ENCODE measurements at regions of chr10 and their contacts with region 1.

Region 1: DNA sequence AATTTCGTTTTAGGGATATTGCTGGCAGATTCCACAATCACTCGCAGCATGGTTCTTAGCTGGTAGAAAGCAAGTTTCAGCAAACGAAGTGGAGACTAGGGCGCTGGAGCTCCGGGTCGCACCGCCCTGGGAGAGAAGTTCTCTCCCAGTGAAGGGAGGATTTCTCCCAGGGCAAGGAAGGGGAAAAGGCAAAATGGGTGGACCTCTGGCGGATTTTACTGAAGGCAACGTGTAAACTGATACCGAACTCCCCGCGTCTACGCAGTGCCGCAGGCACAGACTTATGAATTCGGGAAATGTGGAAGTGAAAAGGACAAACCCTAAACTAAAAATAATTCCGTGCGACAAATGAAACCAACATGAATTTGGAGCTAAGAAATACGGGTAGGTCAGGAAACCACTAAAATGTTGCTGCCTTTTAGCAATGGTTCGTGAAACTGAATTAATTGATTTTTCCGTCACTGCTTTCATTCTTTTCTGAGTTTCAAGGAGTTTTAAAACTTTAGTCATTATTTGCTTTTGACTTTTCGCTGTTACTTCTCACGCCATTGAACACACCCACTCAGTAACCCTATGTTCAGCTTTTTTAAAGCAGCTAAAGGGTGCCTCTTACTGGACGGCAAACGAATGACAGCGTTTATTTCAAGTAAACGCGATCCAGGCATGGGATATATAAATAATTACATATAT is at the start of gene MYOF:
- DNase-seq: peak; percentile 74

Region 2: GRCh38 chr10:93357680-93358079 is 124.6 kb before region 1 on chr10:
- CTCF ChIA-PET with region 1: interaction called, 13 read pairs
- POLR2A ChIA-PET with region 1: interaction called, 3 read pairs
- DNase-seq: peak; percentile 71

Region 3: GRCh38 chr10:93437088-93437945 is 45.0 kb before region 1 on chr10:
- CTCF ChIA-PET with region 1: interaction called, 11 read pairs
- POLR2A ChIA-PET with region 1: interaction called, 15 read pairs
- DNase-seq: peak; percentile 68

Region 4: DNA sequence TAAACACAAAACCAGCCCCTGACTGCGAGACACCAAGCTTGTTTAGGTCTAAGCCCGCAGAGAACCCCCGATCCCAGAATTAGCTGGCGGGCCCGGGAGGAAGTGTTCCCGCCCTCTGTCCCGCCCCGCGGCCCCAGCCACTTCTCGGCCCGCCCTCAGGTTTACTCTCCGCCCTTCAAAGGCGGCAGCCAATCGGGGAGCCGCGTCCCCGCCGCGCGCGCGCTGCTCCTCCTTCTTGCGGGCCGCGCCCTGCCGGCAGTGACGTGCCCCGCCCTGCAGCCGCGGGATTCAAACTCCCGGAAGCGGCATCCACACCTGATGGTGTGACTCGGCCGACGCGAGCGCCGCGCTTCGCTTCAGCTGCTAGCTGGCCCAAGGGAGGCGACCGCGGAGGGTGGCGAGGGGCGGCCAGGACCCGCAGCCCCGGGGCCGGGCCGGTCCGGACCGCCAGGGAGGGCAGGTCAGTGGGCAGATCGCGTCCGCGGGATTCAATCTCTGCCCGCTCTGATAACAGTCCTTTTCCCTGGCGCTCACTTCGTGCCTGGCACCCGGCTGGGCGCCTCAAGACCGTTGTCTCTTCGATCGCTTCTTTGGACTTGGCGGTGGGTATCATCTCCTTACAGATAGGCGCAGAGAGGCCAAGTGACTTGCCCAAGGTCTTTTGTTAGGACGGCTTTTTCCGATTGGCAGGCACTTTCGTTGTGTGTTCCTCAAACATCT is 14.2 kb after region 1 on chr10 and contains the start of gene CEP55:
- CTCF ChIA-PET with region 1: interaction called, 7 read pairs
- POLR2A ChIA-PET with region 1: interaction called, 15 read pairs
- DNase-seq: peak; percentile 98

Measured in HEK293T (cell line).